Activated CD4-positive, alpha-beta T cell treated with anti-CD3 and anti-CD28 coated beads for 36 hours (primary cell): ENCODE measurements at regions of chr19 and their contacts with region 1.

Region 1: DNA sequence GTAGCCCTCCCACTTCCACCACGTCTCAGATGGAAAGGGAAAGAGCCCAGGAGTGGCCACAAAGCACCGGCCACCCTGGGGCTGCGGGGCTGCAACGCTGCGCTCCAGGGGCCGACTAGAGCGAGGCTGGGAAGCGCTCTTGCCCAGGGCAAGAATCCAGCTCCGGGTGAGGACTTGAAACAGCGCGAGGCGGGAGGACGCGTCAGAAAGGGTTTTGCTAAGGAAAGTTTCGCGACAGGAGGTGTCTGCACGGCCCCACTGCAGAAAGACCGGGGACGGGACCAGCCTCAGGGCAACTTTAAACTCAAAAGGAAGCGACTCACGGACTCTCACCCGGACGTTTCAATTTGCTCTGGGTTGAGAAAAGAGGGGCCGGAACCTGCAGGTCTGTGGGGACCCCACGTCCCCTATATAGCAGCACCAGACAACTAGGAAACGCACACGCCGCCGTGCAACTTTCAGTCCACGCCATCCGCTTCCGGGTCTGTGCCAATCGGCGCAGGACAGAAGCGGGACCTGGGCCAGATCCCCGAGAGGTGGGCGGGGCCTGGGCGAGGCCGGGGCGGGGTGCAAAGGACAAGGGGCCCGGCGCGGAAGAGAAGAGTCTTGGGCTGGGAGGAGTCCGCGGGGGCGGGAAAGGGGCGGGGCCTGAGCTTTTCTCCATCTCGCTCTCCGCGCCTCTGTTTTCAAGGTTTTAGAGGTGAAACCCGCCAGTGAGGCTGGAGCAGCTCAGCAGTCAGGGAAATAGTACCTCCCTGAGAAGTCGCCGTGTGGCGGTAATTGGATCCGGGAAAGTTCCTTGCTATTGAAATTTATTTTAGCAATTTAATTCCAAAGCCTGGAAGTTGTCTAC is at the start of gene ZNF816:
- DNase-seq: peak; percentile 100
- ATAC-seq: peak; percentile 100
- H3K4me3 Mint-ChIP-seq: peak within 1 kb of the TSS; percentile 96
- H3K27ac Mint-ChIP-seq: peak within 1 kb of the TSS; percentile 96
- H3K4me1 Mint-ChIP-seq: peaks cover 26% of the 10 kb centered on the region
- H3K27me3 Mint-ChIP-seq: no peaks in the 10 kb centered on the region
- total RNA-seq, gene ZNF816: 10.7 to 11.4 TPM

Region 2: DNA sequence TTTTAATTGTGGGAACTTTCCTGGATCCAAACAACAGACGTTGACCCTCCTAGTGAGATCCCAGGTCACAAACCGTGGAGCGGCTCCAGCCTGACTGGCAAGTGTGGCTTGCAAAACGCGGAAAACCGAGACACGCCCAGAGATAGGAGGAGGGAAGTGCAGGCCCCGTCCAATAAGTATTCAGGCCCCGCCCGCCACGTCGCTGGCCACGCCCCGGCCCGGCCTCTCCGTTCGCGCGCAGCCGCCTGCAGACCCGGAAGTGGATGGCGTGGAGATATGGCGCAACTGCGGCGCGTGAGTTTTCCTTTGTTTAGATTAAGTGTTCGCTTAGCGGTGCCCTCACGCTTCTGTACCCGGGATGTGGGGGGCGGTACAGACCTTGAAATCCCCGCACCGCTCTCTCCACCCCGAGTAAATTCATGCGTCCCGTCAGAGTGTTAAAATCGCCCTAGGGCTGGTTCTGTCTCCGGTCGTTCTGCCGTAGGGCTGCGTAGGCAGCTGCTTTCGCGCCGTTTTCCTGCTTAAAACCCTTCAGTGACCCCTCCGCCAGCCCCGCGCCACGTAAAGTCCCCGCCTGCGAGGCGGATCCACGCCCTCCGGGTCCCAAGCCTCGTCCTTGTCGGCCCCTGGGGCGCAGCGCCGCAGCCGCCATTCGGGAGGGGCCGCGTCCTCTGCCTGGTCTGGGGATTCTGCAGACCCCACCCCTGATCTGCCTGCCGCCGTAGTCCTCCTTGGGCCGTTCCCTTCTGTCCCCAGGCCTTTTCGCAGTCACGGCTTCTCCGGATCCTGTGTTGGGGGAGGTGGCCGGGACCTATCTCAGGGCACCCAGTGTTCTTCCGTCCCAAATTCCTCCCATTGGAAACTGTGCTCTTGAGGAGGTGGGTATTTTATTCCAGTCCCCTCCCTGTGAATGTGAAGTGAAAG is 693.0 kb before region 1 on chr19 and contains the start of gene ZNF766:
- CTCF ChIA-PET with region 1: no interaction called
- POLR2A ChIA-PET with region 1: no interaction called
- intact Hi-C with region 1: loop called in 1 of 2 experiments (anchors 1 kb)
- DNase-seq: peak; percentile 98
- ATAC-seq: peak; percentile 99
- H3K4me3 Mint-ChIP-seq: peak within 1 kb of the TSS; percentile 96
- H3K27ac Mint-ChIP-seq: peak within 1 kb of the TSS; percentile 96
- H3K4me1 Mint-ChIP-seq: peaks cover 35% of the 10 kb centered on the region
- H3K27me3 Mint-ChIP-seq: no peaks in the 10 kb centered on the region
- total RNA-seq, gene ZNF766: 28.6 to 34.2 TPM

Region 3: GRCh38 chr19:52637718-52638585 is 324.7 kb before region 1 on chr19 and contains the start of gene ZNF83:
- CTCF ChIA-PET with region 1: interaction called, 3 read pairs
- POLR2A ChIA-PET with region 1: no interaction called
- intact Hi-C with region 1: loop called in 1 of 2 experiments (anchors 1 kb)
- DNase-seq: peak; percentile 99
- ATAC-seq: peak; percentile 97
- H3K4me3 Mint-ChIP-seq: peak within 1 kb of the TSS; percentile 92
- H3K27ac Mint-ChIP-seq: peak within 1 kb of the TSS; percentile 96
- H3K4me1 Mint-ChIP-seq: peaks cover 13% of the 10 kb centered on the region
- H3K27me3 Mint-ChIP-seq: no peaks in the 10 kb centered on the region
- total RNA-seq, gene ZNF83: 23.8 to 27.5 TPM

Region 4: GRCh38 chr19:52853880-52854279 is 108.7 kb before region 1 on chr19:
- CTCF ChIA-PET with region 1: no interaction called
- POLR2A ChIA-PET with region 1: no interaction called
- intact Hi-C with region 1: loop called (anchors 1 to 2 kb)
- DNase-seq: no peak
- ATAC-seq: no peak
- H3K4me3 Mint-ChIP-seq: no peak overlapping the region
- H3K27ac Mint-ChIP-seq: no peak overlapping the region
- H3K4me1 Mint-ChIP-seq: peaks cover 23% of the 10 kb centered on the region
- H3K27me3 Mint-ChIP-seq: no peaks in the 10 kb centered on the region

Region 5: GRCh38 chr19:52942386-52943133 is 20.1 kb before region 1 on chr19:
- CTCF ChIA-PET with region 1: no interaction called
- POLR2A ChIA-PET with region 1: interaction called, 4 read pairs
- intact Hi-C with region 1: loop called (anchors 1 kb)
- DNase-seq: peak; percentile 97
- ATAC-seq: peak; percentile 99
- H3K4me3 Mint-ChIP-seq: peak overlapping the region; percentile 90
- H3K27ac Mint-ChIP-seq: peak overlapping the region; percentile 91
- H3K4me1 Mint-ChIP-seq: peaks cover 18% of the 10 kb centered on the region
- H3K27me3 Mint-ChIP-seq: no peaks in the 10 kb centered on the region

Region 6: GRCh38 chr19:53123400-53123799 is 160.8 kb after region 1 on chr19:
- CTCF ChIA-PET with region 1: no interaction called
- POLR2A ChIA-PET with region 1: no interaction called
- intact Hi-C with region 1: no loop called
- DNase-seq: no peak
- ATAC-seq: no peak
- H3K4me3 Mint-ChIP-seq: no peak overlapping the region
- H3K27ac Mint-ChIP-seq: no peak overlapping the region
- H3K4me1 Mint-ChIP-seq: no peaks in the 10 kb centered on the region
- H3K27me3 Mint-ChIP-seq: no peaks in the 10 kb centered on the region

Region 7: GRCh38 chr19:53394974-53395839 is 432.6 kb after region 1 on chr19 and contains the start of gene ZNF765:
- CTCF ChIA-PET with region 1: no interaction called
- POLR2A ChIA-PET with region 1: no interaction called
- intact Hi-C with region 1: loop called in 1 of 2 experiments (anchors 1 kb)
- DNase-seq: peak; percentile 98
- ATAC-seq: peak; percentile 99
- H3K4me3 Mint-ChIP-seq: peak within 1 kb of the TSS; percentile 84
- H3K27ac Mint-ChIP-seq: peak within 1 kb of the TSS; percentile 89
- H3K4me1 Mint-ChIP-seq: peaks cover 25% of the 10 kb centered on the region
- H3K27me3 Mint-ChIP-seq: no peaks in the 10 kb centered on the region
- total RNA-seq, gene ZNF765: 10.7 to 10.9 TPM

Region 8: GRCh38 chr19:53642381-53643081 is 679.9 kb after region 1 on chr19:
- CTCF ChIA-PET with region 1: no interaction called
- POLR2A ChIA-PET with region 1: no interaction called
- intact Hi-C with region 1: no loop called
- DNase-seq: no peak
- ATAC-seq: no peak
- H3K4me3 Mint-ChIP-seq: no peak overlapping the region
- H3K27ac Mint-ChIP-seq: no peak overlapping the region
- H3K4me1 Mint-ChIP-seq: no peaks in the 10 kb centered on the region
- H3K27me3 Mint-ChIP-seq: no peaks in the 10 kb centered on the region